H1 (cell line): ENCODE measurements at regions of chr11 and their contacts with region 1.

Region 1: DNA sequence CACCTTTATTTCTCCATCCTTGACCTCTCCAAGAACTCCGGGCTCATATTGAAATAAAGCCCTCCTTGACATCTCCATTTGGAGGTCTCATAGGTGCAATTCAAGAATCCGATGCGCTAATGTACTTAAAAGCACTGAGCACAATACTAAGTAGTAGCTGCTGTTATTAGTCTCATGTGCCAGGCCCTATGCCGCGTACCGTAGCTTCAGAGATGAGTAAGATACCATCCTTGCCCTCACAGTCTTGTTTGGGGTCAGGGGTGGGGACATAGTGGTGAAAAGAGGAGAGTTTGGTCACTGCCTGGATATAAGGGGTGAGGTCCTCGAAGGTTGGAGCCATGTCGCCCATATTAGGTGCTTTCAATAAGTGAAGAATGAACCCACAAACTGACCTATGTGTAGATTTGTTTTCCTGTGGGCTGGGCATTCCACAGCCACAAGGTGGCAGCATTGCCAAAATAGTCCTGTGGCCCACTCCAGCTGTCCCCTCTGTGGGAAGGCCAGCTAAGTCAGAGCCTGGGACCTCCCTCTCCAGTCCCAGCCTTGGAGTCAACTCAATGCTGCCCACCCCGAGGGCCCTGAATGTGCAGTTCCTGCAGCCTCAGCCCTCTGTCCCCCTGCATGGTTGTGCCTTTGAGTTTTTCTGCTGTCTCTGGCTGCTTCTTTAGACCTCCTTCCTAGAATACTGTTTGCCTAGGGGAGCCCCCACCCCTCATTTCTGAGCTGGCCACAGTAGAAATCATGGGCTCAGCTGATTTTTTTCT is 6.5 kb downstream of the DCPS start:
- DNase-seq: peak; percentile 47 to 82
- H3K4me3 ChIP-seq: no peak overlapping the region
- H3K27ac ChIP-seq: no peak overlapping the region
- H3K4me1 ChIP-seq: no peaks in the 10 kb centered on the region
- H3K27me3 ChIP-seq: no peaks in the 10 kb centered on the region
- CTCF ChIP-seq: peak; percentile 78 to 88 (median 85)
- EP300 ChIP-seq: no peak
- POLR2A ChIP-seq: no peak
- RAD21 ChIP-seq: peak; percentile 92 to 93

Region 2: GRCh38 chr11:126355324-126355925 is 45.0 kb after region 1 on chr11 and contains the start of gene ST3GAL4:
- CTCF ChIA-PET with region 1: interaction called, 17 read pairs
- POLR2A ChIA-PET with region 1: interaction called, 3 read pairs
- DNase-seq: peak; percentile 33 to 89
- H3K4me3 ChIP-seq: peak within 1 kb of the TSS; percentile 73 to 99 (median 86)
- H3K27ac ChIP-seq: peak within 1 kb of the TSS; percentile 63; the same call in 1 of the 2 replicates
- H3K4me1 ChIP-seq: peaks cover 3 to 24% (median 15%) of the 10 kb centered on the region in 4 experiments; a peak in 6 of 7 replicates
- H3K27me3 ChIP-seq: no peaks in the 10 kb centered on the region
- CTCF ChIP-seq: no peak
- EP300 ChIP-seq: no peak
- POLR2A ChIP-seq: peak in 1 of 2 experiments; percentile 58; a peak in 2 of 3 replicates
- RAD21 ChIP-seq: no peak
- total RNA-seq, gene ST3GAL4: 15.6 and 16.0 TPM in 2 replicates

Region 3: GRCh38 chr11:126403658-126404057 is 93.2 kb after region 1 on chr11:
- CTCF ChIA-PET with region 1: interaction called, 12 read pairs
- POLR2A ChIA-PET with region 1: interaction called, 3 read pairs
- DNase-seq: no peak
- H3K4me3 ChIP-seq: no peak overlapping the region
- H3K27ac ChIP-seq: no peak overlapping the region
- H3K4me1 ChIP-seq: peaks cover 2 to 15% (median 7%) of the 10 kb centered on the region in 4 experiments; a peak in 6 of 7 replicates
- H3K27me3 ChIP-seq: no peaks in the 10 kb centered on the region
- CTCF ChIP-seq: no peak
- EP300 ChIP-seq: no peak
- POLR2A ChIP-seq: no peak
- RAD21 ChIP-seq: no peak

Region 4: DNA sequence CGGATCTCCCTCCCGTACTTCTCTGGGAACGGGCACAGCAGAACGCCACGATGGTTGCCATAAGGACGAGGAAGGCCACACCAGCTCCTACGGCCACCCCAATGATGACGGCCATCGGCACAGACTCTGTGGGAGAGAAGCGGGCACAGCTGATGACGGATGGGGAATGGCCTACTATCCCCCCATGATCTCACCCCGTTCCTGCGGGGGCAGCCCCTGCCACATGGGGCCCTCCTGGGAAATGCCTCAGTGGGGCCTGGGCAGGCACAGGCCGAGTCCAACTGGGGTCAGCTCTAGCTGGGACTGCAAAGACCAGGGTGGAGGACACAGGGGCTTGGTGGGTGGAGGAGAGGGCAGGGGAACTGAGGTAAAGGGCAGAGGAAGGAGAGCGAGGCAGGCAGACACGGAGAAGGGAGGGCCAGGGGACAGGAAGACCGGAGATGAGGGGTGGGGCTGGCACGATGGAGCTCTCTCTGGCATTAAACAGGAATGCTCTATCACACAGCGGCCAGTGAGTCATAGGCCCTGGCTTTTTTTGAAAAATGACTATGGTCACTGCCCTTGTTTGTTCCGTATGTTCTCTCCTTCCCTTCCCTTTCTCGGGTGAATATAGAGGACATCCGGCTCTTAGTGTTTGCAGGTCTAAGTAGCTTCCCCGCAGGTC is 121.1 kb after region 1 on chr11:
- CTCF ChIA-PET with region 1: interaction called, 31 read pairs
- POLR2A ChIA-PET with region 1: no interaction called
- DNase-seq: no peak
- H3K4me3 ChIP-seq: no peak overlapping the region
- H3K27ac ChIP-seq: no peak overlapping the region
- H3K4me1 ChIP-seq: peaks cover 0 to 18% (median 6%) of the 10 kb centered on the region in 4 experiments; a peak in 5 of 7 replicates
- H3K27me3 ChIP-seq: no peaks in the 10 kb centered on the region
- CTCF ChIP-seq: no peak
- EP300 ChIP-seq: no peak
- POLR2A ChIP-seq: no peak
- RAD21 ChIP-seq: no peak